K562 (cell line): ENCODE measurements at regions of chr11 and their contacts with region 1.

Region 1: GRCh38 chr11:1882519-1883238 is 9.0 kb downstream of the PRR33 start:
- DNase-seq: peak; percentile 86 to 91 (median 90)
- ATAC-seq: peak; percentile 98
- H3K4me3 ChIP-seq: no peak overlapping the region
- H3K27ac ChIP-seq: no peak overlapping the region
- H3K4me1 ChIP-seq: peaks cover 0 to 27% of the 10 kb centered on the region in 2 experiments; a peak in 2 of 5 replicates
- H3K27me3 ChIP-seq: peaks cover 3 to 47% of the 10 kb centered on the region in 2 experiments; a peak in 4 of 5 replicates
- CTCF ChIP-seq: peak; percentile 81 to 93 (median 93)
- EP300 ChIP-seq: no peak
- POLR2A ChIP-seq: no peak
- RAD21 ChIP-seq: peak; percentile 79 to 93

Region 2: GRCh38 chr11:1389103-1389931 is 493.4 kb before region 1 on chr11:
- CTCF ChIA-PET with region 1: no interaction called
- POLR2A ChIA-PET with region 1: no interaction called
- in situ Hi-C with region 1: no loop called
- intact Hi-C with region 1: no loop called
- DNase-seq: peak; percentile 92 to 94 (median 92)
- ATAC-seq: peak; percentile 100
- H3K4me3 ChIP-seq: peak overlapping the region; percentile 13; the same call in 1 of the 2 replicates
- H3K27ac ChIP-seq: no peak overlapping the region
- H3K4me1 ChIP-seq: peaks cover 0 to 25% of the 10 kb centered on the region in 2 experiments; a peak in 2 of 5 replicates
- H3K27me3 ChIP-seq: peaks cover 5 to 53% of the 10 kb centered on the region in 2 experiments; a peak in 3 of 5 replicates
- CTCF ChIP-seq: peak in 2 of 3 experiments; percentile 24 to 28; a peak in 2 of 6 replicates
- EP300 ChIP-seq: no peak
- POLR2A ChIP-seq: no peak
- RAD21 ChIP-seq: peak in 1 of 2 experiments; percentile 32; a peak in 1 of 4 replicates

Region 3: GRCh38 chr11:1401656-1402221 is 480.9 kb before region 1 on chr11:
- CTCF ChIA-PET with region 1: no interaction called
- POLR2A ChIA-PET with region 1: no interaction called
- in situ Hi-C with region 1: no loop called
- intact Hi-C with region 1: no loop called
- DNase-seq: peak; percentile 71 to 84 (median 79)
- ATAC-seq: peak; percentile 83
- H3K4me3 ChIP-seq: no peak overlapping the region
- H3K27ac ChIP-seq: no peak overlapping the region
- H3K4me1 ChIP-seq: peaks cover 0 to 31% of the 10 kb centered on the region in 2 experiments; a peak in 2 of 5 replicates
- H3K27me3 ChIP-seq: peaks cover 0 to 67% of the 10 kb centered on the region in 2 experiments; a peak in 2 of 5 replicates
- CTCF ChIP-seq: no peak
- EP300 ChIP-seq: no peak
- POLR2A ChIP-seq: no peak
- RAD21 ChIP-seq: no peak

Region 4: GRCh38 chr11:1652771-1653540 is 229.7 kb before region 1 on chr11:
- CTCF ChIA-PET with region 1: interaction called, 4 read pairs
- POLR2A ChIA-PET with region 1: no interaction called
- in situ Hi-C with region 1: no loop called
- intact Hi-C with region 1: loop called (anchors 1 kb)
- DNase-seq: peak; percentile 72 to 91 (median 88)
- ATAC-seq: peak; percentile 96
- H3K4me3 ChIP-seq: no peak overlapping the region
- H3K27ac ChIP-seq: no peak overlapping the region
- H3K4me1 ChIP-seq: peaks cover 0 to 15% of the 10 kb centered on the region in 2 experiments; a peak in 2 of 5 replicates
- H3K27me3 ChIP-seq: peaks cover 34 to 89% of the 10 kb centered on the region in 2 experiments
- CTCF ChIP-seq: peak; percentile 85 to 91 (median 90)
- EP300 ChIP-seq: no peak
- POLR2A ChIP-seq: no peak
- RAD21 ChIP-seq: peak; percentile 84 to 91

Region 5: GRCh38 chr11:1837171-1838076 is 45.3 kb before region 1 on chr11:
- CTCF ChIA-PET with region 1: no interaction called
- POLR2A ChIA-PET with region 1: no interaction called
- in situ Hi-C with region 1: no loop called
- intact Hi-C with region 1: loop called (anchors 2 kb)
- DNase-seq: peak; percentile 74 to 88 (median 86)
- ATAC-seq: peak; percentile 88
- H3K4me3 ChIP-seq: no peak overlapping the region
- H3K27ac ChIP-seq: no peak overlapping the region
- H3K4me1 ChIP-seq: peaks cover 0 to 53% of the 10 kb centered on the region in 2 experiments; a peak in 4 of 5 replicates
- H3K27me3 ChIP-seq: peaks cover 3 to 63% of the 10 kb centered on the region in 2 experiments; a peak in 3 of 5 replicates
- CTCF ChIP-seq: peak; percentile 75 to 90 (median 81)
- EP300 ChIP-seq: no peak
- POLR2A ChIP-seq: no peak
- RAD21 ChIP-seq: peak; percentile 71 to 94

Region 6: GRCh38 chr11:1917671-1918516 is 35.2 kb after region 1 on chr11:
- CTCF ChIA-PET with region 1: no interaction called
- POLR2A ChIA-PET with region 1: interaction called, 3 read pairs
- in situ Hi-C with region 1: loop called (anchors 5 kb)
- intact Hi-C with region 1: no loop called
- DNase-seq: peak in 2 of 4 experiments; percentile 43 to 47
- ATAC-seq: peak; percentile 59
- H3K4me3 ChIP-seq: no peak overlapping the region
- H3K27ac ChIP-seq: no peak overlapping the region
- H3K4me1 ChIP-seq: peaks cover 0 to 31% of the 10 kb centered on the region in 2 experiments; a peak in 1 of 5 replicates
- H3K27me3 ChIP-seq: peaks cover 12 to 60% of the 10 kb centered on the region in 2 experiments; a peak in 4 of 5 replicates
- CTCF ChIP-seq: peak; percentile 31 to 48 (median 47); a peak in 5 of 6 replicates
- EP300 ChIP-seq: no peak
- POLR2A ChIP-seq: no peak
- RAD21 ChIP-seq: no peak